ENCODE measurements at regions of chr3 and their contacts with region 1.

Region 1: DNA sequence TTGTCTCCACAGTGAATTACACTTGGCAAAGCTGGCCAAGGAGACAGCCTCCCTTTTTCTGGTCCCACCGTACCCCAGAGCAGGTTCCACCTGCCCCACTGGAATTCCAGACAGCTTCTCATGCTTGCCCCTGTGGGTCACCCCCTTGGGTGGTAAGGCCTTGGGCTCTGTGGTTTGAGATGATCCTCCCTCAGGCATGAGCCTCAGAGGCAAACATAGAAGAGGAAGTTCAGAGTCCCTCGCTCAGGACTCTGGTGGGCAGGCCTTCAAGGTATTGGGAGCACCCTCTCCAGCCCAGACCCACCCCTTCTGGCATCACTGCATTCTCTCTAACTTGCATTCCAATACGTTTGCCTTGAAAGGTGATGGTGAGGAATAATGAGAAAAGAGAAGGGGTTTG is 17.6 kb upstream of the UBA7 start:
- DNase-seq: no peak
- H3K4me3 ChIP-seq: no peak overlapping the region
- H3K4me1 ChIP-seq: no peaks in the 10 kb centered on the region
- H3K27me3 ChIP-seq: no peaks in the 10 kb centered on the region

Region 2: DNA sequence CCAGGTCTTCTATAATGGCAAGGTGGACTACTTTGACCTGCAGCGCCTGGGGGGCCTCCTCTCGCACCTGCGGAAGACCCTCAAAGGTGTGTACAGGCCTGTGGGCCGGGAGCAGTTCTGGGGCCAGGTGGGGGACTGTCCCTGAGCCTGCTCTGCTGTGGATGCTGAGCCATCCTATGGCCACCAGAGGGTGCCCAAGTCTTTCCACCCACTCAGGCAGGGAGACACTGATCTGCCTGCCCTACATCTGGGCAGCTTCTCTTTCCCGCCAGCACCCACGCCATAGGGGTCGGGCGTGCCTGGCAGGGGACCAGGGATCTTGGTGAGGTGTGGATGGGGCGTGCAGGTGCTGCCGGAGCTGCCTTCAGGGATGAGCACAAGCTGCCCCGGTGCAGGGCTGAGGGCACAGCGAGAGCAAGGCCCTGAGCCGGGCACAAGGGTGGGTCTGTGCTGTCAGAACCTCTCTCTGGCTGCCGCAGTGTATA is 127.9 kb before region 1 on chr3:
- in situ Hi-C with region 1: loop called (anchors 5 kb)
- DNase-seq: peak; percentile 51 to 71
- H3K4me3 ChIP-seq: no peak overlapping the region
- H3K4me1 ChIP-seq: no peaks in the 10 kb centered on the region
- H3K27me3 ChIP-seq: no peaks in the 10 kb centered on the region

Region 3: DNA sequence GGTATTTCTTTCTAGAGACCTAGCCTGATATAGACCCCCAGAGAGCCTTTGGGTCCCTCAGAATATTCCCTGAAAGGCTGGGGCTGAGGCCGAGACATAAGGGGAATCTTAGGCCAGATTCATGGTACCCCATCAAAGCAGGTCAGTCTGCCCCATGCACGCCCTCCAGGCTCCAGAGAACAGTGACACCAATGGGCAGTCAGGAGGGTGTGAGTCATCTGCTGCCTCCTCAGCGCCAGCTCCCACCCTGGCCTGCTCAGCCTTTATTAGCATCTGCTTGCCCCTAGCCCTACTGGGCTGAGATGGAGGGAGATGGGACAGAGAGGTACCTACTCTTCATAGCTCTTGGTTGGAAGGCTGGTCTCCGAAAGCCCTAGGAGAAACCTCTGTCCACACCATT is 52.7 kb after region 1 on chr3:
- in situ Hi-C with region 1: no loop called
- DNase-seq: no peak
- H3K4me3 ChIP-seq: no peak overlapping the region
- H3K4me1 ChIP-seq: peaks cover 5% of the 10 kb centered on the region
- H3K27me3 ChIP-seq: 0 out of 2 replicates have a peak, but pooled peaks cover 3% of the 10 kb centered on the region

Measured in HAP-1 (cell line).